Activated CD4-positive, alpha-beta memory T cell treated with anti-CD3 and anti-CD28 coated beads, Interleukin-2, amount 10 ng/mL, durations not matched to agents 7 days and 5 days (primary cell): ENCODE measurements at regions of chr3 and their contacts with region 1.

Region 1: GRCh38 chr3:141360888-141361598 is 7.3 kb upstream of the ZBTB38 start:
- DNase-seq: no peak
- H3K4me3 Mint-ChIP-seq: peak overlapping the region; percentile 19
- H3K27ac Mint-ChIP-seq: no peak overlapping the region
- H3K4me1 Mint-ChIP-seq: peaks cover 10% of the 10 kb centered on the region
- H3K27me3 Mint-ChIP-seq: peaks cover 3% of the 10 kb centered on the region

Region 2: DNA sequence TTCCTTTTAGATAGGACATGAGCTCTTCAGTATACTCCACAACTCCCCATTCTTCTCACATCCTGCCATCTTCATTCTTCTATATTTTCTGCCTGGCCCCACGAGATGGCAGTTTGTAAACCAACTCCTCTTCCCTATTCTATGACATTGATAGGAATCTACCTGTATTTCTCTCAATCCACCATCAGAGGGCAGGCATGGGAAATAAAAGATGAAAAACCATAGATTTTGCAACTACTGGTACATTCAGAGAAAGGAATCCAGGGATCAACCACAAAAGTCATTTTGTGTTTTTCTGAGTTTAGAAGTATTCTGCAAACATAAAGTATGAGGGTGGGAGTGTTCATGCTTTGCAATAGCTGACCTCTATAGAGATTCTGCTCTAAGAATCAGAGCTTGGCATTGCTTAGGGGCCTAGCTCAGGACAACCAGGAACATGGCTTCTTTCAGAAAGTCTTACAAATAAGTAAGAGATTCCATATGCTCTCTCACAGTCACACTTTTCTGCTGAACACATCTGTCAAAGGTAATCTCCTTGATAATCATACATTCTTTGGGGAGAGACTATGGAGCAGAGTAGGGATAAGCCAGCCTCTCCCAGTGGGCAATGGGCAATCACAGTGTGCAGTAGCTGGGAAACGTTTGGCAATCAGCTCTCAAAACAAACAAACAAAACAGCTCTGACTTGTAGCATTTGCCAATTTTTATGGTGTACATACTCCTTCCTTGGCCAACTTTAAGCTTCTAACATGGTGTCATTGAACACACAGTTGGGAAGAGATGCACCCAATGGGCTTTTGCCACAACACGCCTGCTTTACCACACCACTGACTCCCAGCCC is 462.5 kb before region 1 on chr3:
- CTCF ChIA-PET with region 1: no interaction called
- POLR2A ChIA-PET with region 1: no interaction called
- DNase-seq: no peak
- H3K4me3 Mint-ChIP-seq: no peak overlapping the region
- H3K27ac Mint-ChIP-seq: no peak overlapping the region
- H3K4me1 Mint-ChIP-seq: no peaks in the 10 kb centered on the region
- H3K27me3 Mint-ChIP-seq: peaks cover 24% of the 10 kb centered on the region

Region 3: GRCh38 chr3:141303481-141304223 is 57.4 kb before region 1 on chr3:
- CTCF ChIA-PET with region 1: interaction called, 22 read pairs
- POLR2A ChIA-PET with region 1: interaction called, 6 read pairs
- DNase-seq: peak; percentile 60
- H3K4me3 Mint-ChIP-seq: no peak overlapping the region
- H3K27ac Mint-ChIP-seq: no peak overlapping the region
- H3K4me1 Mint-ChIP-seq: peaks cover 37% of the 10 kb centered on the region
- H3K27me3 Mint-ChIP-seq: peaks cover 5% of the 10 kb centered on the region

Region 4: DNA sequence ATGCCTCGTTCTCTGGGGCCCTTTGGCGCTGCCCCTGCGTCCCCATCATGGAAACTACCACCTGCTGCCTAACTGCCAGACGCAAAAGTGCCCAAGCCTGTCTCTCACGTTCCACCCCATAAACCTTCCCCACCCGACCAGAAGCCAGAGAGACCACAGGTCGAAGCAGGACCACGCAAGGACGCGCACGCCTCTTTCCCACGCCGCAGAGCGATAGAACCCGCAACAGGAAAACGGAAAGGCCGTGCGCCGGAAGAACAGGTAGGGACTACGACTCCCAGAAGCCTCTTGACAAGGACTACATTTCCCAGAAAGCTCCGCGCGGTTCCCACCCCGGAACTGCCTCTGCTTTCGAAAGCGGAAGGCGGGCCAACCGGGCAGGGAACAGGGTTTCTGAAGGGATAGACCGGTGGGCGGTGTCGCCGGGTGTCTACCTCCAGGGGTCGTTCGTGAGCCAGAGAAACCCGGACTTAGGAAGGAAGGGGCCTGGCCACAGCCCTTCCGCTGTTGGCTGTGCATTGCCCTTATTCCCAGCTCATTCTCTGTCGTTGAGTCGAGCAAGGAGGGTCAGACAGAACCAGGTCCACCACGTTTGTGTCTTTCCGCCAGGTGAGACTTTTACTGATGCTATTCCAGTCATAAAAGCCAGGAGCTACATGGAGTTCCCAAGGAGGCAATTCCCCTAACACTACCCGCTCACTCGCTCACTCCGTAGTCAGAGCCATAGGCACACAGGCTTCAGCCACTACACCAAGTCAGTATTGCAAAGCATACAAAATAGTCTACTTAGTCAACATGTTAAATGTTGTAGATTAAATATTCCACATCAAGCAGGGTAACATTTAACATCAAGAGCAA is 49.3 kb before region 1 on chr3:
- CTCF ChIA-PET with region 1: interaction called, 14 read pairs
- POLR2A ChIA-PET with region 1: interaction called, 10 read pairs
- DNase-seq: peak; percentile 99
- H3K4me3 Mint-ChIP-seq: peak overlapping the region; percentile 93
- H3K27ac Mint-ChIP-seq: peak overlapping the region; percentile 86
- H3K4me1 Mint-ChIP-seq: peaks cover 58% of the 10 kb centered on the region
- H3K27me3 Mint-ChIP-seq: no peaks in the 10 kb centered on the region

Region 5: GRCh38 chr3:141379250-141379966 is 18.4 kb after region 1 on chr3:
- CTCF ChIA-PET with region 1: interaction called, 14 read pairs
- POLR2A ChIA-PET with region 1: interaction called, 4 read pairs
- DNase-seq: peak; percentile 58
- H3K4me3 Mint-ChIP-seq: peak overlapping the region; percentile 60
- H3K27ac Mint-ChIP-seq: peak overlapping the region; percentile 98
- H3K4me1 Mint-ChIP-seq: peaks cover 63% of the 10 kb centered on the region
- H3K27me3 Mint-ChIP-seq: no peaks in the 10 kb centered on the region

Region 6: DNA sequence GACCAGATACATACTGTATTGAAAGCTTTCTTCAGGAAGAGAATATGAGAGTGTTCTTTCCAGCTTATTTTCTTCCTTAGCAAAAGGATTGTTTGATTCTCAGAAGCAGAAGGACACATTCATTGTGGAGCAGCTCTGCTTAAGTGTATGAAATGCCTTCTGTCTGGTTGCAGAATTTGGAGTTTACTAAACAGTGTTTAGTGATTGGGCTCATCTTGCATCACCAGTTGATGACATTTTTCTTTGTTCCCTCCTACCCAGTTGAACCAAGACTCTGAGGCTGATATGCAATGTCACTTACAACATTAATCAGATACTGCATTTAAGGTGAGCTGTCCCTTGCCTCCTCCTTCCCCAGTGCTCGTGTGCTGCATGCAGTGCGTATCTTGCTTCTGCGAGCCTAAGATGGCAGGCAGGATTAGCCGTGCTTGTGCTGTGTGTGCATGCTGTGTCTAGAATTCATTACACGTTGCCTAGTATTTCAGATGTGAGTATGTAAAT is 25.6 kb after region 1 on chr3:
- CTCF ChIA-PET with region 1: interaction called, 12 read pairs
- POLR2A ChIA-PET with region 1: interaction called, 11 read pairs
- DNase-seq: no peak
- H3K4me3 Mint-ChIP-seq: peak overlapping the region; percentile 63
- H3K27ac Mint-ChIP-seq: peak overlapping the region; percentile 65
- H3K4me1 Mint-ChIP-seq: peaks cover 37% of the 10 kb centered on the region
- H3K27me3 Mint-ChIP-seq: no peaks in the 10 kb centered on the region

Region 7: DNA sequence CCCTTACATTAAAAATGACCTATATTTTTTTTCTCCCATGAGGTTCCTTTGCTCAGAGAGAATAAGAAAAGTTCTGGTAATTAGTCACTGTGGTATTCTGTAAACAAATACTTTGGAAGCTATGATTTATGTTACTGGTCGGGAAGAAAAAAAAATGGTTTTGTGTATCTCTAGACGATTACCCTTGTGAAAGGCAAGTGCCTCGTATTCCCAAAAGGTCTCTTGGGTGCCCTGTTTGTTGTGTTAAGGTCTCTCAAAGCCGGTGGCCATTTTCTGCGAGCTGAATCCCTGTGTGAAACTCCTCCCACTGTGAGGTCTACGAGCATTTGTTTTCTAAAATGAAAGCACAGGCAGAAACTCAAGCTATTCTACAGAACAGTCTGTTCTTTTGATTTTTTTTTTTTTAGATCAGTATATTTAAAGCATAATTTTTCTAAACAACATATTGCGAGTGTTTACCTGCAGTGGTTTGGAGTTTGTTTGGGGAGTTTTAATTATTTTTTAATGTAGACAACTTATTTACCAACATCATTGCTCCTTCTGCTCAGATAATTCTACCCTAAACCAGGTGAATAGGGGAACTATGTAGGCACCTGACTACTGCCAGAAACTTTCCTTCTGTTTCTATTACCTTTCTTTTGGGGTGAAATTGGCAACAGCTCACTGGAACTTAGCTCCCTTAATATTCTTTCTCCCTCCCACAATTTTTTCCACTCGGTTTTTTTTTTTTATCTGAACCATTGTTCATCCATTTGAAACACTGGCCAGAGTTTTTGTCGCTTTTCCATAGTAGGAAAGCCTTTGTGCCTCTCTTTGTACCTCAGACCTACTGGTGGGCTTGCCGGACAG is 51.3 kb after region 1 on chr3:
- CTCF ChIA-PET with region 1: interaction called, 10 read pairs
- POLR2A ChIA-PET with region 1: interaction called, 4 read pairs
- DNase-seq: peak; percentile 69
- H3K4me3 Mint-ChIP-seq: peak overlapping the region; percentile 78
- H3K27ac Mint-ChIP-seq: peak overlapping the region; percentile 99
- H3K4me1 Mint-ChIP-seq: peaks cover 72% of the 10 kb centered on the region
- H3K27me3 Mint-ChIP-seq: no peaks in the 10 kb centered on the region

Region 8: GRCh38 chr3:141482250-141483017 is 121.4 kb after region 1 on chr3:
- CTCF ChIA-PET with region 1: no interaction called
- POLR2A ChIA-PET with region 1: no interaction called
- DNase-seq: no peak
- H3K4me3 Mint-ChIP-seq: no peak overlapping the region
- H3K27ac Mint-ChIP-seq: no peak overlapping the region
- H3K4me1 Mint-ChIP-seq: peaks cover 24% of the 10 kb centered on the region
- H3K27me3 Mint-ChIP-seq: peaks cover 13% of the 10 kb centered on the region